ENCODE measurements at regions of chr4 and their contacts with region 1.

Region 1: DNA sequence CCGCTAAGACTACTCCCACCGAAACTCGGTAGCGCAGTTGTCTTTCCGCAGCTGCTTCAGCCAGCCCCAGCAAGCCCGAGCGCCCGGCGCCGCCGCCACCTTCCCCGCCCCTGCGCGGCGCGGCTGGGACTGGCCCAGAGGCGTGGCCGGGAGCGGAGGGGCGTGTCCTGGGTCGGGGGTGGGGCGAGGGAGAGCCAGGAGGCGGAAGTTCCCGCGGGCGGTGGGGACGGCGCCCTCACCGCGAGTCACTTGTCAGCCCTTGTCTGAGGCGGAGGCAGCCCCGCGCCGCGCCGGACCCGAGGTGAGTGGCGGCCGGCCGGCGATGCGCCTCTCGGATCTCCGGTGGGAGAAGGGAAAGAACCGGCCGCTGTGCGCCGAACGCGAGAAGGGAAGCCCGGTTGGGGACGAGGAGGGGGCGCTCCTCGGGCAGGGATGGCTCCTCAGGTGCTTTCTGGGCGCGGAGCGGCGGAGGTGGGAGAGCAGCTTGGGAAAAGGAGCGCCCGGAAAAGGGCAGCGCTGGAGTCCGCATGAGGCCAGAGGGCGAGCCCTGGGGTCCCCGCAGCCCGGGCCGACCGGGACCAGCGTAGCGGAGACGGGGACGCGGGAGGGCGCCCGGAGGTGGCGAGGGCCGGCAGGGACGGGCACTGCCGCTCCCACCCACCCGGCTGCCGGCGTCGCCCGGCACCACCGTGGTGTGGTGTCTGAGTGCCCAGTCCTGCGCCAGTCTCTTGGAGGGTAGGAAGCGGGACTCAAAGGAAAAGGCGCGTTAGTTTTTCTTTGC is at the start of gene PDLIM5:
- DNase-seq: peak; percentile 90
- H3K4me3 Mint-ChIP-seq: peak within 1 kb of the TSS; percentile 85
- H3K27ac Mint-ChIP-seq: peak within 1 kb of the TSS; percentile 41
- H3K4me1 Mint-ChIP-seq: peaks cover 26% of the 10 kb centered on the region
- H3K27me3 Mint-ChIP-seq: peaks cover 13% of the 10 kb centered on the region
- total RNA-seq, gene PDLIM5: 19.0 to 22.2 TPM

Region 2: DNA sequence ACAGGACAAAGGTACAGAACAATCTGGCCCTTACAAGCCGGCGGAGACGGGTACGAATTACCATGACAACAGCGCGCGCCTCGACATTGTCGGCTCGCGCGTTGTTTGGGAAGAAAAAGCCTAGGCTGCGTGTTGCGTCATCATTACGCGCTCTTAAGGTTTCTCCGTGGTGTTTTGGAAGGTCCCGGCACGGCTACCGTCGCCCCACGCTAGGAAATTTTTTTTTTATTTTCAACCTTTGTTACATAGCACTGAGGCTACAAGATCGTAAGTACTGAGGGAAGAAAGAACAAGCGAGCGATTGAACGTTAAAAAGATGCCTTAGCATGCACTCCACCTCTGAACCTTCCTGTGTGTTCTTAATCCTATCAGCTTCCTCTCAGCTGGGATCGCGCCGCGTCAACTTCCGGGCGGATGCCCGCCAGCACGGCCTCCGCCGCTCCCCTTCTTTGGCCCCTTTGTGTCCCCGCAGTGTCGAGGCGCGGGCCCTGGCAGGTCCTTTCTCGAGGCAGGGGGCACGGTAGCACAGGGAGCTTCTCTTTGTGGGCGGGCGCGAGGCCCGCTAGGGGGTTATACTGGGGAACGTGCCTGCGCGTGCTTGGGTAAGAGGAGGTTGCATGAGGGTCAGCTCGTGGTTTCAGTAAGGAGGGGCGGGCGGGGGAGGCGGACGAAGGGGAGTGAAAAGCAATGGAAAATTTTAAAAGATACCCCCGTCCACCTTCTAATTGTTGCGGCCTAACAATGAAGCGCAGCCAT is 244.2 kb before region 1 on chr4 and contains the start of gene SMARCAD1:
- CTCF ChIA-PET with region 1: no interaction called
- intact Hi-C with region 1: loop called (anchors 1 kb)
- DNase-seq: peak; percentile 95
- H3K4me3 Mint-ChIP-seq: peak within 1 kb of the TSS; percentile 88
- H3K27ac Mint-ChIP-seq: peak within 1 kb of the TSS; percentile 97
- H3K4me1 Mint-ChIP-seq: peaks cover 32% of the 10 kb centered on the region
- H3K27me3 Mint-ChIP-seq: no peaks in the 10 kb centered on the region
- total RNA-seq, gene SMARCAD1: 20.4 to 20.7 TPM

Region 3: GRCh38 chr4:94349193-94349592 is 102.7 kb before region 1 on chr4:
- CTCF ChIA-PET with region 1: no interaction called
- intact Hi-C with region 1: loop called (anchors 2 kb)
- DNase-seq: no peak
- H3K4me3 Mint-ChIP-seq: no peak overlapping the region
- H3K27ac Mint-ChIP-seq: no peak overlapping the region
- H3K4me1 Mint-ChIP-seq: peaks cover 42% of the 10 kb centered on the region
- H3K27me3 Mint-ChIP-seq: peaks cover 18% of the 10 kb centered on the region

Region 4: GRCh38 chr4:94507708-94508107 is 55.8 kb after region 1 on chr4:
- CTCF ChIA-PET with region 1: no interaction called
- intact Hi-C with region 1: loop called (anchors 1 kb)
- DNase-seq: peak; percentile 18
- H3K4me3 Mint-ChIP-seq: no peak overlapping the region
- H3K27ac Mint-ChIP-seq: peak overlapping the region; percentile 26
- H3K4me1 Mint-ChIP-seq: peaks cover 13% of the 10 kb centered on the region
- H3K27me3 Mint-ChIP-seq: no peaks in the 10 kb centered on the region

Region 5: DNA sequence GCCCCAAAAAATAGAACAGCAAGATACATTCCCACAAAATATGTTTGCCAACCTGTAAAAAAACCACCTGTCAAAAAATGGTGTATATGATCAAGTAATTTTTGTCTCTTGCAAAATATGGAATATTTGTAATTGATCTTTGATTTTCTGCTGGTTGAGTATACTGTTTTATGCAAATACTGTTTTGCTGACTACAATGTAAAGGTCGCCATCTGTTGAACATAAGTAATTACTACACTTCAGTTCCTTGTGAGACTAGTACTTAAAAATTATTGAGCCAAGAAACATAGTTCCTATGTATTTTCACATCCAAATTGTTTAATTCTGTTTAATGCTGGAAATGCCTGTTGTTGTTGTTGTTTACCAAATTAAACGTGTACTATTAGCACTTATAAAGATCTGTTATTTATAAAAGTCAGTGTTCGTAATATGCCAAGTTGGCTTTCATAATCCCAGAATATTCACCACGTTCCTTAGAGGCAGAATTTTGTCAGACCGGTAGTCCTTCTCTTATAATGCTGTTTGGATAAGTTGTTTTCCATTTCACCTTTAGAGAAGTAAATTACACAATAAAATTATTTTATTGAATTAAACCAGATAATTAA is 144.1 kb after region 1 on chr4:
- CTCF ChIA-PET with region 1: no interaction called
- intact Hi-C with region 1: loop called (anchors 1 kb)
- DNase-seq: no peak
- H3K4me3 Mint-ChIP-seq: no peak overlapping the region
- H3K27ac Mint-ChIP-seq: no peak overlapping the region
- H3K4me1 Mint-ChIP-seq: no peaks in the 10 kb centered on the region
- H3K27me3 Mint-ChIP-seq: no peaks in the 10 kb centered on the region

Measured in activated naive CD4-positive, alpha-beta T cell treated with anti-CD3 and anti-CD28 coated beads for 36 hours (primary cell).